CD4-positive, alpha-beta T cell (primary cell): ENCODE measurements at regions of chr5 and their contacts with region 1.

Region 1: GRCh38 chr5:119340597-119341218 is 15.1 kb upstream of the TNFAIP8 start:
- DNase-seq: peak in 12 of 14 experiments; percentile 44 to 91 (median 62)
- ATAC-seq: peak; percentile 55
- H3K4me3 ChIP-seq: peak overlapping the region; percentile 49
- H3K4me3 Mint-ChIP-seq: peak overlapping the region; percentile 81
- H3K27ac ChIP-seq: peak overlapping the region; percentile 77 to 83
- H3K27ac Mint-ChIP-seq: peak overlapping the region; percentile 97
- H3K4me1 ChIP-seq: peaks cover 93% of the 10 kb centered on the region
- H3K4me1 Mint-ChIP-seq: peaks cover 97% of the 10 kb centered on the region
- H3K27me3 ChIP-seq: no peaks in the 10 kb centered on the region
- H3K27me3 Mint-ChIP-seq: no peaks in the 10 kb centered on the region
- CTCF ChIP-seq: no peak

Region 2: DNA sequence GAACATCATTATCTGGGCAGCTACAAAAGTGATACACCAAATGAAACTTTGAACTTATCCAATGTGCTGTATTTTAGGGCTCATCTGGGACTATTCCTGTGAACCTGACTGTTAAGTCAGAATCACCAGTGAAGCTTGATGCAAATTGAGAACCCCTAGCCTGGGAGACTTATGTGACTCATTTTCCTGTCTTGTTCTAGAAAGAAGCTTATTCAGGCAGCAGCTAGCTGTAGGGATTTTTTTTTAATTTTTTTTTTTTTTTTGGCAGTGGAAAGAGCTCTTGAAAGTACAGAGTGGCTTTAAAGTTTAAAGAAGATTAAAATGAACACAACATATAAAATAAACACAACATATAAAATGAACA is 66.0 kb before region 1 on chr5:
- CTCF ChIA-PET with region 1: interaction called, 6 read pairs
- POLR2A ChIA-PET with region 1: interaction called, 84 read pairs
- intact Hi-C with region 1: loop called in 1 of 2 experiments (anchors 5 kb)
- DNase-seq: peak in 4 of 14 experiments; percentile 44 to 81 (median 70)
- ATAC-seq: peak; percentile 38
- H3K4me3 ChIP-seq: peak overlapping the region; percentile 69
- H3K4me3 Mint-ChIP-seq: peak overlapping the region; percentile 99
- H3K27ac ChIP-seq: peak overlapping the region; percentile 67 to 84
- H3K27ac Mint-ChIP-seq: peak overlapping the region; percentile 97
- H3K4me1 ChIP-seq: peaks cover 84% of the 10 kb centered on the region
- H3K4me1 Mint-ChIP-seq: peaks cover 96% of the 10 kb centered on the region
- H3K27me3 ChIP-seq: no peaks in the 10 kb centered on the region
- H3K27me3 Mint-ChIP-seq: peaks cover 6% of the 10 kb centered on the region
- CTCF ChIP-seq: no peak

Region 3: DNA sequence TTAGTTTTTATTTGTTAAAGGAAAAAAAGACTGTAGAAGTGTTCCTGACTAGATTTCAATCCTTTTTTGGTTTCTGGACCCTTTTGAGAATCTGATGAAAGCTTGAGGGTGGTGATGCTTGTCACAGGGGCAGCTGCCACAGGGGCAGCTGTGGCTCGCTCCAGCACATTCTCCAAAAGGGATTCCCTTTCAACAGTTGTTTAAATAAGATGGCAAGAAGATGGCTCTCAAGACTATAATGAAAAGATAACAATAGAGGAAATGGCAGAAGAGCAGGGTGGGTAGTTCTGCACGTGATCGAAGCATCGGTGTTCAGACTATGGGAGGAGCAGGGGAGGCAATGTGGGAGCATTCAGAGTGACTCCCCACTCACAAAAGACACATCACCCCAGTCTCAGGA is 31.4 kb before region 1 on chr5:
- CTCF ChIA-PET with region 1: interaction called, 25 read pairs
- POLR2A ChIA-PET with region 1: interaction called, 31 read pairs
- intact Hi-C with region 1: loop called in 1 of 2 experiments (anchors 5 kb)
- DNase-seq: peak in 3 of 14 experiments; percentile 23 to 52 (median 40)
- ATAC-seq: peak; percentile 39
- H3K4me3 ChIP-seq: peak overlapping the region; percentile 19
- H3K4me3 Mint-ChIP-seq: peak overlapping the region; percentile 82
- H3K27ac ChIP-seq: peak overlapping the region; percentile 63 to 71
- H3K27ac Mint-ChIP-seq: peak overlapping the region; percentile 95
- H3K4me1 ChIP-seq: peaks cover 70% of the 10 kb centered on the region
- H3K4me1 Mint-ChIP-seq: peaks cover 96% of the 10 kb centered on the region
- H3K27me3 ChIP-seq: no peaks in the 10 kb centered on the region
- H3K27me3 Mint-ChIP-seq: no peaks in the 10 kb centered on the region
- CTCF ChIP-seq: no peak

Region 4: GRCh38 chr5:119328753-119329602 is 11.7 kb before region 1 on chr5:
- CTCF ChIA-PET with region 1: interaction called, 20 read pairs
- POLR2A ChIA-PET with region 1: interaction called, 51 read pairs
- intact Hi-C with region 1: loop called in 1 of 2 experiments (anchors 1 kb)
- DNase-seq: peak in 13 of 14 experiments; percentile 45 to 85 (median 67)
- ATAC-seq: peak; percentile 60
- H3K4me3 ChIP-seq: peak overlapping the region; percentile 13
- H3K4me3 Mint-ChIP-seq: peak overlapping the region; percentile 83
- H3K27ac ChIP-seq: peak overlapping the region; percentile 77 to 94
- H3K27ac Mint-ChIP-seq: peak overlapping the region; percentile 97
- H3K4me1 ChIP-seq: peaks cover 84% of the 10 kb centered on the region
- H3K4me1 Mint-ChIP-seq: peaks cover 94% of the 10 kb centered on the region
- H3K27me3 ChIP-seq: no peaks in the 10 kb centered on the region
- H3K27me3 Mint-ChIP-seq: no peaks in the 10 kb centered on the region
- CTCF ChIP-seq: no peak

Region 5: GRCh38 chr5:119379942-119380547 is 39.3 kb after region 1 on chr5:
- CTCF ChIA-PET with region 1: interaction called, 3 read pairs
- POLR2A ChIA-PET with region 1: interaction called, 7 read pairs
- intact Hi-C with region 1: loop called (anchors 5 kb)
- DNase-seq: no peak
- ATAC-seq: no peak
- H3K4me3 ChIP-seq: no peak overlapping the region
- H3K4me3 Mint-ChIP-seq: no peak overlapping the region
- H3K27ac ChIP-seq: no peak overlapping the region
- H3K27ac Mint-ChIP-seq: peak overlapping the region; percentile 60
- H3K4me1 ChIP-seq: peaks cover 50% of the 10 kb centered on the region
- H3K4me1 Mint-ChIP-seq: peaks cover 84% of the 10 kb centered on the region
- H3K27me3 ChIP-seq: no peaks in the 10 kb centered on the region
- H3K27me3 Mint-ChIP-seq: no peaks in the 10 kb centered on the region
- CTCF ChIP-seq: no peak

Region 6: GRCh38 chr5:119570910-119571309 is 230.2 kb after region 1 on chr5:
- CTCF ChIA-PET with region 1: no interaction called
- POLR2A ChIA-PET with region 1: no interaction called
- intact Hi-C with region 1: no loop called
- DNase-seq: no peak
- ATAC-seq: no peak
- H3K4me3 ChIP-seq: no peak overlapping the region
- H3K4me3 Mint-ChIP-seq: no peak overlapping the region
- H3K27ac ChIP-seq: no peak overlapping the region
- H3K27ac Mint-ChIP-seq: no peak overlapping the region
- H3K4me1 ChIP-seq: no peaks in the 10 kb centered on the region
- H3K4me1 Mint-ChIP-seq: no peaks in the 10 kb centered on the region
- H3K27me3 ChIP-seq: no peaks in the 10 kb centered on the region
- H3K27me3 Mint-ChIP-seq: peaks cover 21% of the 10 kb centered on the region
- CTCF ChIP-seq: no peak